Endothelial cell of umbilical vein (primary cell): ENCODE measurements at regions of chr4 and their contacts with region 1.

Region 1: DNA sequence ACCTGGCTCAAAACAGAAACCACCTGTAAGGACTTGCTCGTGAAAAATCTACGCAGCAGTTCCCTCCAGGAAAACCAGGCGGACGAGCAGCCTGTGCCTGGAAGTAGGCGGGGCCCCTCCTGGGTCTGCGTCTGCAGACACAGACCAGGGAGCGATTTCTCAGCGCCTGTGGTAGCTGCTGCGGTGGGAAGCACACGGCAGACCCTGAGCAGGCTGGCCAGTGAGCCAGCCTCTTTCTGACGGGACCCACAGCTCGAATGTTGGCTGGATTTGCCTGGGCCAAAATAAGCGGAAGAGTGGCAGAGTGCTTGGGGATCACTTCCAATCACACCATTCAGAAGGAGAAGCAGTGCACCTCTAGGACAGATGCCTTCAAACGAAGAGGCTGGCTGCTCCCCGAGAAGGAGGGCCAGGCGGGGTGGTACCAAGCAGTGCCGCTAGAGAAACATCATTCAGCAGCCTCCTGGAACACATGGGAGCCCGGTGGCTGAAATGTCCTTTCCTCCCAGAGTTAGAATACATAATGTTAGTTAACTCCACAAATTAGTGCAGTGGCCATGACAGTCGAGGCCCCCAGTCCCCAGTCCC is 85.9 kb downstream of the GATB start:
- DNase-seq: peak; percentile 54
- H3K4me3 ChIP-seq: peak overlapping the region in 2 of 3 experiments; percentile 15 to 49
- H3K27ac ChIP-seq: no peak overlapping the region
- H3K4me1 ChIP-seq: peaks cover 6% of the 10 kb centered on the region
- H3K27me3 ChIP-seq: no peaks in the 10 kb centered on the region
- CTCF ChIP-seq: no peak
- POLR2A ChIP-seq: no peak

Region 2: GRCh38 chr4:151031831-151032605 is 642.9 kb before region 1 on chr4:
- CTCF ChIA-PET with region 1: no interaction called
- POLR2A ChIA-PET with region 1: no interaction called
- dilution Hi-C with region 1: no loop called
- intact Hi-C with region 1: no loop called
- DNase-seq: peak; percentile 97
- H3K4me3 ChIP-seq: peak overlapping the region in 1 of 3 experiments; percentile 23
- H3K27ac ChIP-seq: peak overlapping the region; percentile 96
- H3K4me1 ChIP-seq: peaks cover 6% of the 10 kb centered on the region
- H3K27me3 ChIP-seq: no peaks in the 10 kb centered on the region
- CTCF ChIP-seq: no peak
- POLR2A ChIP-seq: peak; percentile 75

Region 3: DNA sequence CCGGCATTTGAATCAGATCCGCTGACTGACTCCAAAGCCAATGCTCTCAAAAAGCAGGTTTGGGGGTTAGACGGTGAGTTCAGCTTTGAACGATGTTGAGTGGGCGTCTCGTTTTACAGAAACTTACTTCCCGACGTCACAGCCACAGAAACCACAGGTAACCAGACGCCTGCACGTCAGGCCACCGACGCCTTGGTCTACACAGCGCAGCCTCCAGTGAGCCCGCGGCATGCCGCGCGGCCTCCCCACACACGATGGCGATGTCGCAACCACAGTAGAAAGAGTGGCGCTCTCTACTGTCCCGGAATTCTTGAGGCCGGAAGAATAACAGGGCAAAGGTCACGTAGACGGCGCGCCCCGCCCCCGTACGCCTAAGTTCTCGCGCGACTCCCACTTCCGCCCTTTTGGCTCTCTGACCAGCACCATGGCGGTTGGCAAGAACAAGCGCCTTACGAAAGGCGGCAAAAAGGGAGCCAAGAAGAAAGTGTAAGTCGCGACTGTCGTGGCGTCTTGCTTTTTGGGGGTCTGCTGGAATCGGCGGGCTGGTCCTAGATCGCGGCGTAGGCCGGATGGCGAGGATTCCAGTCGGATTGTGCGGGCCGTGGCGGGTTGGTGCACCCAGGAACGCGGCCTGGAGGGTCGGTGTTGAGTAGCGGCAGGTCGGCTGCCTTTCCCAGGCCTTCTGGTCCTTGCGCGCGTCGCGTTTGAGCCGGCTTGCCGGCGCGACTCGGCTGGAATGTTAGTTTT is 575.5 kb before region 1 on chr4 and contains the start of gene RPS3A:
- CTCF ChIA-PET with region 1: no interaction called
- POLR2A ChIA-PET with region 1: no interaction called
- dilution Hi-C with region 1: no loop called
- intact Hi-C with region 1: no loop called
- DNase-seq: peak; percentile 99
- H3K4me3 ChIP-seq: peak within 1 kb of the TSS; percentile 46 to 89 (median 78)
- H3K27ac ChIP-seq: peak within 1 kb of the TSS; percentile 69
- H3K4me1 ChIP-seq: peaks cover 17% of the 10 kb centered on the region
- H3K27me3 ChIP-seq: no peaks in the 10 kb centered on the region
- CTCF ChIP-seq: peak; percentile 94 to 96
- POLR2A ChIP-seq: peak; percentile 98
- total RNA-seq, gene RPS3A: 1,468 and 1,494 TPM in 2 replicates

Region 4: GRCh38 chr4:151658959-151659600 is 15.8 kb before region 1 on chr4:
- CTCF ChIA-PET with region 1: no interaction called
- POLR2A ChIA-PET with region 1: no interaction called
- dilution Hi-C with region 1: no loop called
- intact Hi-C with region 1: loop called (anchors 1 kb)
- DNase-seq: peak; percentile 30
- H3K4me3 ChIP-seq: no peak overlapping the region
- H3K27ac ChIP-seq: peak overlapping the region; percentile 42
- H3K4me1 ChIP-seq: peaks cover 13% of the 10 kb centered on the region
- H3K27me3 ChIP-seq: no peaks in the 10 kb centered on the region
- CTCF ChIP-seq: no peak
- POLR2A ChIP-seq: no peak